ENCODE measurements at regions of chr11 and their contacts with region 1.

Region 1: DNA sequence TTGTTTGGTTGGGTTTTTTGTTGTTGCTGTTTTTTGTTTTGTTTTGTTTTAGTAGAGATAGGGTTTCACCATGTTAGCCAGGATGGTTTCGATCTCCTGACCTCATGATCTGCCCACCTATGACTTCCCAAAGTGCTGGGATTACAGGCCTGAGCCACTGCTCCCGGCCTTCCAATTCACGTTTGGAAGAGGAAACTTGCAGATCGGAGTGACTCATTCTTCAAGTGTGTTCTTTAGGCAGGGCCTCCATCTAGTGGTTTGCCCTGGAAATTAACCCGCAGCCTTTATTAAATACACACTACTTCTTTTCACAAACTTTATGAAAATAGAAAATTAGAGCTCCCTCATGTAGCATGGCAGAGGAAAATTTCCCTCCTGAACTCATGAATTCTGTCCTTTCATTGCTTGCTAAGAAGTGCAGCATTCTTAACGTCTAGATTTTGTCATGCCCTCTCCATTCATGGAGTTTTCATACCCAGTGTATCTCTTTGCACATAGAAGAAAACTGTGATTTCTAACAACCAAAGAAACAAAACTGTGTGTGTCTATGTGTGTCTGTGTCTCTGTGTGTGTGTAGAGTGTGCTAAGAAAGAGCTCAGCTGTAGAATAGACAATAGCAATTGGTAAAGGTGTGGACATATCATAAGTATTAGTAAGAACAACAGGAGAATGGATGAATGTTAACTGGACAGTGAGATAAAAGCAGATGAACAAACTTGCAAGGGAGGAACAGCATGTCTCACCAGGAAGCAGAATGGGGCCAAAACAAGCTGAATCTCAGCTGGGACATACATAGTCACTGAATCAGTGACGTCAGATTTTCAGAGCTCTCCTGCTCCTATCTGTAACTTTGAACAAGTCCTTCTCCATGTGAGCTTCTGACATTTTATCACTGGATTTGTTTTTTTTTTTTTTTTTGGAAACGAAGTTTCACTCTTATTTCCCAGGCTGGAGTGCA is 118.4 kb downstream of the BBOX1 start:
- DNase-seq: no peak
- ATAC-seq: peak; percentile 82
- H3K4me3 ChIP-seq: no peak overlapping the region
- H3K27ac ChIP-seq: no peak overlapping the region
- H3K4me1 ChIP-seq: no peaks in the 10 kb centered on the region
- H3K27me3 ChIP-seq: no peaks in the 10 kb centered on the region
- CTCF ChIP-seq: peak; percentile 62 to 75 (median 62); a peak in 5 of 6 replicates
- EP300 ChIP-seq: no peak
- POLR2A ChIP-seq: no peak
- RAD21 ChIP-seq: peak; percentile 89

Region 2: DNA sequence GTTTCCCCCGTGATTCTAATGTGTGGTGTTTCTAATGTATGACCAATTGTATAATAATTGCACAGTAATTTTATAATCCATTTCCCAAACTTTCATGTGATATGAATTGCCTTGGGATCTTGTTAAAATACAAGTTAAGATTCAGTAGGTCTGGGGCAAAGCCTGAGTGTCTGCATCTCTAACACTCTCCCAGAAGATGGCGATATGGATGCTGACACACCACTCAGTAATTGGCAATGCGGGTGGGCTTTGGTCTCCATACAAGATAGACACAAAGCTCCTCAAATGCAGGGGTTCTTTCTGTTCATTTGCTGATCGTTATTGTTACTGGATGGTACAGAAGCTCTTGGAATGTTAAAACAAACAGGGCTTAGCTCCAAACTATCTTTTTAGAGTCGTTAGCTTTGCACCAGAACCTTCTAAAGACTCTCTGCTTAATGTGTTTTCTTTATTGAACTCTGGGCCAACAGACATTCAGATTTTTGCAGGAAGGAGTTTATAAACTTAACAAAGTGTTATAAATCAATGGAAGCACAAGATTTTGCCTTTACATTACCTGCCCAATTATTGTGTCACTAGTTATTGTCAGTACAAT is 872.4 kb before region 1 on chr11:
- CTCF ChIA-PET with region 1: interaction called, 27 read pairs
- POLR2A ChIA-PET with region 1: no interaction called
- RAD21 ChIA-PET with region 1: interaction called, 19 read pairs
- SMC1A ChIA-PET with region 1: interaction called, 13 read pairs
- in situ Hi-C with region 1: no loop called
- intact Hi-C with region 1: loop called (anchors 2 kb)
- DNase-seq: no peak
- ATAC-seq: peak; percentile 82
- H3K4me3 ChIP-seq: no peak overlapping the region
- H3K27ac ChIP-seq: no peak overlapping the region
- H3K4me1 ChIP-seq: no peaks in the 10 kb centered on the region
- H3K27me3 ChIP-seq: no peaks in the 10 kb centered on the region
- CTCF ChIP-seq: peak; percentile 34 to 56 (median 52); a peak in 3 of 6 replicates
- EP300 ChIP-seq: no peak
- POLR2A ChIP-seq: no peak
- RAD21 ChIP-seq: peak; percentile 33; the same call in 1 of the 2 replicates

Region 3: GRCh38 chr11:26761361-26761809 is 397.6 kb before region 1 on chr11:
- CTCF ChIA-PET with region 1: interaction called, 20 read pairs
- POLR2A ChIA-PET with region 1: no interaction called
- RAD21 ChIA-PET with region 1: interaction called, 7 read pairs
- SMC1A ChIA-PET with region 1: interaction called, 16 read pairs
- in situ Hi-C with region 1: loop called (anchors 5 kb)
- intact Hi-C with region 1: no loop called
- DNase-seq: no peak
- ATAC-seq: peak; percentile 68
- H3K4me3 ChIP-seq: no peak overlapping the region
- H3K27ac ChIP-seq: no peak overlapping the region
- H3K4me1 ChIP-seq: no peaks in the 10 kb centered on the region
- H3K27me3 ChIP-seq: no peaks in the 10 kb centered on the region
- CTCF ChIP-seq: no peak
- EP300 ChIP-seq: no peak
- POLR2A ChIP-seq: no peak
- RAD21 ChIP-seq: no peak

Region 4: GRCh38 chr11:27266125-27266524 is 107.1 kb after region 1 on chr11:
- CTCF ChIA-PET with region 1: no interaction called
- POLR2A ChIA-PET with region 1: no interaction called
- RAD21 ChIA-PET with region 1: no interaction called
- SMC1A ChIA-PET with region 1: no interaction called
- in situ Hi-C with region 1: no loop called
- intact Hi-C with region 1: no loop called
- DNase-seq: no peak
- ATAC-seq: no peak
- H3K4me3 ChIP-seq: no peak overlapping the region
- H3K27ac ChIP-seq: no peak overlapping the region
- H3K4me1 ChIP-seq: no peaks in the 10 kb centered on the region
- H3K27me3 ChIP-seq: no peaks in the 10 kb centered on the region
- CTCF ChIP-seq: no peak
- EP300 ChIP-seq: no peak
- POLR2A ChIP-seq: no peak
- RAD21 ChIP-seq: no peak